GM23248 (cell line): ENCODE measurements at regions of chr6 and their contacts with region 1.

Region 1: DNA sequence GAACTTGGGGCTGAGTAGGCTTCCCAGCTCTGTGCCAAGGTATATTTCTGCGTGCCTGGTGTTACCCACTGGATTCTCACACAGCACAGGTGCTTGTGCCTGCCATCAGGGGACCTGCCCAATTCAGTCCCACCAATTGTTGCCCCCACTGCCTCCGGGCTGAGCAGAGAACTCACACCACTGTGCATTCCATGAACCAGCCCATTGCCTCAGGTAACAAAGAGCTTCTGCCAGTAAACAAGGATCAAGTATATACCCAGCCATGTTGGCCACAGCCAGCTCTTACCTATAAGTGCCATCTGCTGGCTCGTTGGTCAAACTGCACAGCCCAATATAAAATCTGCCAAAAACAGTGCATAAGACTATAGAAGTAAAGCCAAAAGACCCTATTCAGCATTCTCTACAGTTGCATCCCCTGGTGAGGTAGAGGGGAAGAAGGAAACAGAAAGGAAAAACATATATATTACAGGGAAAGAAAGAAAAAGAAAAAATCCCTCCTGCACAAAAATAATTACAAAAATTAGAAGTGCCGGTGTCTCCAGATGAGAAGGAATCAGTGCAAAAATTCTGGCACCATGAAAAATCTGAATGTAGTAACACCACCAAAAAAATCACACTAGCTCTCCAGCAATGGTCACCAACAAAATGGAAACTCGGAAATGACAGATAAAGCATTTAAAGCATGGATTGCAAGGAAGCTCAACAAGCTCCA is 241.4 kb downstream of the IBTK start:
- DNase-seq: peak; percentile 73
- H3K4me3 ChIP-seq: no peak overlapping the region
- H3K27ac ChIP-seq: no peak overlapping the region
- H3K4me1 ChIP-seq: no peaks in the 10 kb centered on the region
- H3K27me3 ChIP-seq: no peaks in the 10 kb centered on the region

Region 2: GRCh38 chr6:81241126-81242041 is 764.8 kb before region 1 on chr6:
- in situ Hi-C with region 1: loop called (anchors 25 kb)
- DNase-seq: peak; percentile 65
- H3K4me3 ChIP-seq: no peak overlapping the region
- H3K27ac ChIP-seq: peak overlapping the region; percentile 18; the same call in 1 of the 2 replicates
- H3K4me1 ChIP-seq: peaks cover 24% of the 10 kb centered on the region
- H3K27me3 ChIP-seq: no peaks in the 10 kb centered on the region

Region 3: GRCh38 chr6:81752138-81752920 is 253.9 kb before region 1 on chr6 and contains the start of gene TENT5A:
- in situ Hi-C with region 1: loop called (anchors 25 kb)
- DNase-seq: peak; percentile 98
- H3K4me3 ChIP-seq: peak within 1 kb of the TSS; percentile 99
- H3K27ac ChIP-seq: peak within 1 kb of the TSS; percentile 97
- H3K4me1 ChIP-seq: peaks cover 25% of the 10 kb centered on the region
- H3K27me3 ChIP-seq: no peaks in the 10 kb centered on the region
- total RNA-seq, gene TENT5A: 48.6 and 50.5 TPM in 2 replicates

Region 4: GRCh38 chr6:81950877-81951276 is 55.3 kb before region 1 on chr6:
- in situ Hi-C with region 1: no loop called
- DNase-seq: peak; percentile 66
- H3K4me3 ChIP-seq: no peak overlapping the region
- H3K27ac ChIP-seq: no peak overlapping the region
- H3K4me1 ChIP-seq: peaks cover 22% of the 10 kb centered on the region
- H3K27me3 ChIP-seq: no peaks in the 10 kb centered on the region